ENCODE measurements at regions of chr14 and their contacts with region 1.

Region 1: DNA sequence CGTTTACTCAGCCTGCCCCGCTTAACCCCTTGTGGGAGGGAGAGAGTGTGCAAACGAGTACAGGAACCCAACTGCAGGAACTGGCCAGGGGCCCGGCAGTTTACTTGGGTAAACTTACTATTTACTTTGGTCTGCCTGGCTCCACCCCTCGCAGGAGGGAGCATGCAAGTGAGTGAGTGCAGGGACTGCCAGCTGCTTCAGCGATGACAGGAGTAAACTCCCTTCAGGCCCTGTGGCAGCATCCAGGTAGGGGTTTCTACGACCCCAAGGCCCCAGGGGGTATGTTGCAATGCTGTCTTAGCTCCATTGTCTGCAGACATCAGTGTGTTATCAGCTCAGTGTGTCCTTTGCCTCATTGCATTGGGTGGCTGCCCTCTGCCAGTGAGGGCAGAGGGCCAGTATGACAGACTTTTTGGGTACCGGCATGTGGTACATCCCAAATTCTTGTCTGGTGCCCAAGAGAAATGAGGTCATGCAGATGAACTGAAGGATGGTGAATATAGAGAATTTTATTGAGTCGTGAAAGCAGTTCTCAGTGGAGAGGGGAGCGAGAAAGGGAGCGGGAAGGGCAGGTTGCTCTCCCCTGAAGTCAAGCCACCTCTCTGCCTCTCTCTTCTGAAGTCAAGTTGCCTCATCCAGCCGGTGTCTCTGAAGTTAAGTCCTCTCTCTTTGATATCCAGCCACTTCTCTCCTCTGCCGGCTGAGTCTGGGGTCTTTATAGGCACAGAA is 181.8 kb downstream of the FUT8 start:
- DNase-seq: no peak
- H3K4me3 ChIP-seq: no peak overlapping the region
- H3K27ac ChIP-seq: no peak overlapping the region
- H3K4me1 ChIP-seq: no peaks in the 10 kb centered on the region
- H3K27me3 ChIP-seq: no peaks in the 10 kb centered on the region
- CTCF ChIP-seq: no peak

Region 2: GRCh38 chr14:65548878-65549277 is 45.4 kb before region 1 on chr14:
- CTCF ChIA-PET with region 1: no interaction called
- POLR2A ChIA-PET with region 1: no interaction called
- intact Hi-C with region 1: no loop called
- DNase-seq: no peak
- H3K4me3 ChIP-seq: no peak overlapping the region
- H3K27ac ChIP-seq: no peak overlapping the region
- H3K4me1 ChIP-seq: no peaks in the 10 kb centered on the region
- H3K27me3 ChIP-seq: no peaks in the 10 kb centered on the region
- CTCF ChIP-seq: no peak

Region 3: DNA sequence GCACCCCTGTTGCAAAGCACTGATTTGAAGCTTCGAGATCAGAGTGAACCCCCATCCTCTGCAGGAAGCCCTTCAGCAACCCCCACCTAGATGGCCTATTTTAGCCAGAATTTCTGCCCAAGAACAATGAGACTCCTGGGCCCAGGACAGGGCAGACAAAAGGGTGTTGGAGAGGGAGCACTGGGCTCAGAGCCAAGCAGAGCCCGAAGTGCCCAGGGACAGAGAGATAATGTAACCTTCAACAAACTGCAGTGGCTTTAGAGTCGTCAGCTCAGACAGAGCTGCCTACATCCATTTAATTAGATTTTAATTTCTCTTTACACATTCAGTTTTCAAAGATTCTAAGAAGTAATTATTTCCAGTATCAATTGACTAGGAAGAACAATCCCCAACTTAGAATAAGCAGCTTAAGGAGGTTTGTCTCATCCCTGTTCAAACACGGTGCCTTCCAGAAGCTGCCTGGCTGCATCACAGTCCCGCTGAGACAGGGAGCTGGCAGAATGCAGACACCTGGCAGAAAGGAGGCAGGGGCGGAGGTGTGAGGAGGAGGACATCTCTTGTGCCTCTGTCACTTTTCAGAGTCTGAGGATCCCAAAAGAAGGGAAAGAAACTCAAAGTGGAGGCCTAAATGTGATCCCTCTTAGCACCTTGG is 387.0 kb after region 1 on chr14:
- CTCF ChIA-PET with region 1: no interaction called
- POLR2A ChIA-PET with region 1: interaction called, 14 read pairs
- intact Hi-C with region 1: no loop called
- DNase-seq: no peak
- H3K4me3 ChIP-seq: no peak overlapping the region
- H3K27ac ChIP-seq: no peak overlapping the region
- H3K4me1 ChIP-seq: no peaks in the 10 kb centered on the region
- H3K27me3 ChIP-seq: no peaks in the 10 kb centered on the region
- CTCF ChIP-seq: no peak